Tibial artery (tissue), 4 donors: ENCODE measurements at regions of chr18 and their contacts with region 1.

Region 1: DNA sequence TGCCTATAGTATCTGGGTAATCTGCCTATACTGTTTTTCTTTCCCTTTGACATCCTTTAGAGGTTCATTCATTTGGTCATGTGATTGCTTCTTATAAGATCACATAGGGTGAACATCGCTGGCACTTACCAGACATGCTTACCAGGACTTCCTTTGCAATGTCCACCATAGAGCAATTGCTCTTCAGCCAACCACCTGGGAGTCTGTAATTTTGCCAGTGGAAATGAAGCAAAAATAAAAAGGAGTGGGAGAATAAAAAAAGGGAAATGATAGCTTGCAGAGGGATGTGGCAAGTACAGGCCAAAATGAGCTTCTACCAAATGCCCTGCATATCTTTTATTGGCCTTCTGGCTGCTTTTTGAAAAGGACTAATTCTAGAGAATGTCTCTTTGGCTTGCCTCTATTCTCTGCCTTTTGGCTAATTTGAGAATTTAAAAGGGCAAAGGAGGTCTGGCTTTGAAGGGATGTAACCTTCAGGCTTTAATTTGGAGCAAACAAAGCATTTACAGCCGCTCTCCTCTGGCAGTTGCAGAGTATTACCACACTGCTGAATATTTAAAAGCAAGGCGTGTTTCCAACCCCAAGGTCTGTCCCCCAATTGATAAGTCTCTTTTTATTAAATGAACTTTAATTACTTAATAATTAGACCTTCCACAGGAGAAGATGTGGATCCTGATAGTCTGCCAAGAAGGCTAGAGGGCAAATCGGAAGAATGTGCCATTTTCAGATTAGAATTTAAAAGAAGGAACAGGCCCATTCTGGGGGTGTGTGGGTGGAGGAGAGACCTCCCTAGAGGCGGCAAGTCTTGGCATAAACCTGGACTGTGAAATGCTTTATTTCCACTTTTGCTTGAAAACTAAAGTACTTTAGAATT is 557.9 kb downstream of the DCC start:
- DNase-seq: no peak
- H3K4me3 ChIP-seq: no peak overlapping the region
- H3K27ac ChIP-seq: no peak overlapping the region
- H3K4me1 ChIP-seq: no peaks in the 10 kb centered on the region
- H3K27me3 ChIP-seq: no peaks in the 10 kb centered on the region
- CTCF ChIP-seq: no peak

Region 2: GRCh38 chr18:52920665-52921064 is 22.8 kb after region 1 on chr18:
- intact Hi-C with region 1: no loop called
- DNase-seq: no peak
- H3K4me3 ChIP-seq: no peak overlapping the region
- H3K27ac ChIP-seq: no peak overlapping the region
- H3K4me1 ChIP-seq: no peaks in the 10 kb centered on the region
- H3K27me3 ChIP-seq: no peaks in the 10 kb centered on the region
- CTCF ChIP-seq: no peak

Region 3: GRCh38 chr18:52933356-52933755 is 35.5 kb after region 1 on chr18:
- intact Hi-C with region 1: loop called (anchors 2 kb)
- DNase-seq: no peak
- H3K4me3 ChIP-seq: no peak overlapping the region
- H3K27ac ChIP-seq: no peak overlapping the region
- H3K4me1 ChIP-seq: no peaks in the 10 kb centered on the region
- H3K27me3 ChIP-seq: no peaks in the 10 kb centered on the region
- CTCF ChIP-seq: no peak

Region 4: GRCh38 chr18:53710080-53710479 is 812.2 kb after region 1 on chr18:
- intact Hi-C with region 1: no loop called
- DNase-seq: no peak
- H3K4me3 ChIP-seq: no peak overlapping the region
- H3K27ac ChIP-seq: no peak overlapping the region
- H3K4me1 ChIP-seq: no peaks in the 10 kb centered on the region
- H3K27me3 ChIP-seq: no peaks in the 10 kb centered on the region
- CTCF ChIP-seq: no peak